Ascending aorta (tissue), 2 donors: ENCODE measurements at regions of chr6 and their contacts with region 1.

Region 1: GRCh38 chr6:143450453-143451371 is at the starts of genes ADAT2 and PEX3:
- DNase-seq: peak; percentile 70 to 95
- H3K4me3 ChIP-seq: peak within 1 kb of the TSS; percentile 56 to 83
- H3K27ac ChIP-seq: peak within 1 kb of the TSS; percentile 44 to 70
- H3K4me1 ChIP-seq: peaks cover 0 to 8% of the 10 kb centered on the region in 2 donors
- H3K27me3 ChIP-seq: no peaks in the 10 kb centered on the region
- CTCF ChIP-seq: no peak
- total RNA-seq, gene ADAT2: 24.8 TPM
- total RNA-seq, gene PEX3: 0.96 TPM

Region 2: DNA sequence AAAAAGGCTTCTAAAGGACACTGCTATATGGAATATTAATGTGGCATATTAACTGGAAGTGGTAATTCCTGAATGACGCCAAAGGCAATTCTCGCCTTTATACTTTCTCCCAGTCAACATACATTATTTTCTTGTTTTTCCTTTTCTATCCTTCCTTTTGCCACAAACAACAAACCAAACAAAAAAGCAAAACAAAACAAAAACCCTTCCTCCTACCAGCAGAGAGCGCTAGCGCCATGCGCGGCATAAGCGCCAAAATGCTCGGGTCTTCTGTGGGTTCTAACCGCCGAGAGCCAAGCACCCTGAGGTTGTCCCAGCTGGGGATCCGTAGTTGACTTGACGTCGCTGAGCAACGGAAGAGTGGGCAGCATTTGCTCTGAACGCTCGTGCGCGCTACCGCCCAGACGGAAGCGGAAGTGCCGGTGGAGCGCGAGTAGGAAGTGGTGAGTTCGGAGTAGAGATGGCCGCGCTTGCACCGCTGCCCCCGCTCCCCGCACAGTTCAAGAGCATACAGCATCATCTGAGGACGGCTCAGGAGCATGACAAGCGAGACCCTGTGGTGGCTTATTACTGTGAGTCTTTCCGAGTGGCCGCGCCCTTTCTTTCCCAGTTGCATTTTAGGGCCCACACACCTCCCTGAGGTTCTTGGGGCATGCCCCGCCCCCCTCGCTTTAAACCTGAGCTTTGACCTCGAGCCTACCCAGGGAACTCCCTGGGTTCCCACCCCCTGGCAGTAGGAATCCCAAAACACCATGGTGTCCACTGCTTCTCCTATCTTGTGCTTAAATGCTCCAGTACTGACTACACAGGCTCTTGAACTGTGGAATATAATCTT is 1303.7 kb before region 1 on chr6 and contains the starts of genes NMBR and VTA1:
- intact Hi-C with region 1: loop called (anchors 5 kb)
- DNase-seq: peak; percentile 91 to 98
- H3K4me3 ChIP-seq: peak within 1 kb of the TSS; percentile 76 to 86
- H3K27ac ChIP-seq: peak within 1 kb of the TSS; percentile 59
- H3K4me1 ChIP-seq: peaks cover 0 to 14% of the 10 kb centered on the region in 2 donors
- H3K27me3 ChIP-seq: no peaks in the 10 kb centered on the region
- CTCF ChIP-seq: peak; percentile 85 to 90 (median 88)
- total RNA-seq, gene NMBR: not detected
- total RNA-seq, gene VTA1: 21.3 TPM

Region 3: DNA sequence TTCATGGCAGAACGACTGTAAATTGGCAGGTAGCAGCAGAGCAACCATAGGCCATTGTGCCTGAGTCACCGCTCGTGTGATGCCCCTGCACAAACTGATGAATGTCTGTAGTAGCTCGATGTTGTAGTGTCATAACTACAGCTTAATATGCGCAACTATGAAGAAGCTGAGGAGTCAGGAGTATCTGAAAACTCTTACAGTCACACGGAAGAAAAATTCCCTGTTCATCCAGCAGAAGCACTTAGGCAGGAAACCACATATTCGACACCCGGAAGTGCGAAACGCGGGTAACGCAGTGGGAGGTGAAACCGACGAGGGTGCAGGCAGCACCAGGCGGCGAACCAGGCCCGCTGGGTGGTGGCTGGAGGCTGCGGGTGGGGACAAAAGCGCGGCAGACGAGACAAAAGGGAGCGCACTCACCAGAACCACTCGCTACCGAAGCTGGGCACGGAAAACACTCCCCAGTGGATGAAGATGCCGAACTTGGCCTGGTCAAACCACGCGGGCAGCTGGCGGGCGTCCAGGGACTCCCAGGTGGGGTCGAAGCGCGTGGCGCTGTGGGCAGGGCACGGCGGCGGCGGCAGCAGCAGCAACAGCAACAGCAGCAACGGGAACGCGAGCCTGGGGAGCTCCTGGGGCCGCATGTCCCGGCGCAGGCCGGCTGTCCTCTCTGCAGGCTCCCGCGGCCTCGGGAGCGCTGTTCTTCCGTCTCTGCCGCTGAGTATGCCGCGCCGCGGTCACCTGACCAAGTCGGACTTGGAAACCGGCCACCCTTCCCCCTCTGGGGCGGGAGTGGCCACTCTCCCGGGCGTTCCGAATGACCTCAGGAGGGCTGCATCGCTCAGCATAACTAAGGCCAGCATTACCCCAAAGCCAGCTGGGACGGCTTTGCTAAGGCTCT is 60.5 kb after region 1 on chr6 and contains the start of gene FUCA2:
- intact Hi-C with region 1: loop called (anchors 1 kb)
- DNase-seq: peak; percentile 76 to 96
- H3K4me3 ChIP-seq: peak within 1 kb of the TSS; percentile 78 to 85
- H3K27ac ChIP-seq: peak within 1 kb of the TSS; percentile 83 to 90
- H3K4me1 ChIP-seq: peaks cover 5 to 13% of the 10 kb centered on the region in 2 donors
- H3K27me3 ChIP-seq: no peaks in the 10 kb centered on the region
- CTCF ChIP-seq: no peak
- total RNA-seq, gene FUCA2: 9.7 TPM

Region 4: DNA sequence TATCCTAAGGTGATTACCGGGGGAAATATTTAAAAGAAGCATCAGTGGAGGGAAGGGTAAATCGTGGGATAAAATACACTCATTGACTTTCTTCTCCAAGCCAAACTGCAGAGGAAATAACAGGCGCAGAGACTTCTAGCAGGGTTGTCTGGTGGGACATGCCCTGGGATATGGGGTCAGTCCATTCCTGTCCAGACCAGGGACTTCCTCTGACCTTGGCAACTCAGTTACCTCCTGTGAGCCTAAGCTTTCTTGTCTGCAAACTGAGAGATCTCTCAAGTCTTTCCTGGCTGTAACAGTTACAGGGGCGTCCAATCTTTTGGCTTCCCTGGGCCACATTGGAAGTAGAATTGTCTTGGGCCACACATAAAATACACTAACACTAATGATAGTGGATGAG is 205.3 kb after region 1 on chr6:
- intact Hi-C with region 1: loop called (anchors 5 kb)
- DNase-seq: no peak
- H3K4me3 ChIP-seq: no peak overlapping the region
- H3K27ac ChIP-seq: no peak overlapping the region
- H3K4me1 ChIP-seq: peaks cover 0 to 8% of the 10 kb centered on the region in 2 donors
- H3K27me3 ChIP-seq: no peaks in the 10 kb centered on the region
- CTCF ChIP-seq: no peak

Region 5: DNA sequence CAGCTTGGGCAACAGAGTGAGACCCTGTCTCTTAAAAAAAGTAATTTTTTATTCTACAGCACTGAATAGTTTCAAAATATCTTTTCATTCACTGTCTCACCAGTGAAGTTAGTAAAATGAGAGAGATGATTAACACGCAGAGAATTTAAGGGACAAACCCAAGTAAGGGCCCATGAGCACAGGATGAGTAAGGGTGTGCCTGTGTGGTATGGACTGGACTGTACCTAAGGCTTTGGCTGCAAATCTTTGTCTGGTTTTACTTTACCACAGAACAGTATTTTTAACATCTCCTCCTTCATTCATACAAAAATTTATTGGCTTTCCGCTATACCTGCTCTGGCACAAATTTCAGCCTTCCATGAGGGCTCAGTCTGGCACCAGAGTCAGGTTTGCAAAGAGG is 1267.7 kb after region 1 on chr6:
- intact Hi-C with region 1: no loop called
- DNase-seq: no peak
- H3K4me3 ChIP-seq: no peak overlapping the region
- H3K27ac ChIP-seq: no peak overlapping the region
- H3K4me1 ChIP-seq: no peaks in the 10 kb centered on the region
- H3K27me3 ChIP-seq: no peaks in the 10 kb centered on the region
- CTCF ChIP-seq: no peak